Activated naive CD4-positive, alpha-beta T cell treated with anti-CD3 and anti-CD28 coated beads, Interleukin-2, amount 10 ng/mL, durations not matched to agents 7 days and 5 days (primary cell): ENCODE measurements at regions of chr5 and their contacts with region 1.

Region 1: GRCh38 chr5:132064738-132065331 is 4.4 kb downstream of the IL3 start:
- DNase-seq: peak; percentile 87
- H3K4me3 Mint-ChIP-seq: no peak overlapping the region
- H3K27ac Mint-ChIP-seq: peak overlapping the region; percentile 26
- H3K4me1 Mint-ChIP-seq: peaks cover 19% of the 10 kb centered on the region
- H3K27me3 Mint-ChIP-seq: peaks cover 58% of the 10 kb centered on the region

Region 2: GRCh38 chr5:131142970-131143617 is 921.7 kb before region 1 on chr5:
- CTCF ChIA-PET with region 1: no interaction called
- DNase-seq: no peak
- H3K4me3 Mint-ChIP-seq: no peak overlapping the region
- H3K27ac Mint-ChIP-seq: no peak overlapping the region
- H3K4me1 Mint-ChIP-seq: peaks cover 7% of the 10 kb centered on the region
- H3K27me3 Mint-ChIP-seq: no peaks in the 10 kb centered on the region

Region 3: DNA sequence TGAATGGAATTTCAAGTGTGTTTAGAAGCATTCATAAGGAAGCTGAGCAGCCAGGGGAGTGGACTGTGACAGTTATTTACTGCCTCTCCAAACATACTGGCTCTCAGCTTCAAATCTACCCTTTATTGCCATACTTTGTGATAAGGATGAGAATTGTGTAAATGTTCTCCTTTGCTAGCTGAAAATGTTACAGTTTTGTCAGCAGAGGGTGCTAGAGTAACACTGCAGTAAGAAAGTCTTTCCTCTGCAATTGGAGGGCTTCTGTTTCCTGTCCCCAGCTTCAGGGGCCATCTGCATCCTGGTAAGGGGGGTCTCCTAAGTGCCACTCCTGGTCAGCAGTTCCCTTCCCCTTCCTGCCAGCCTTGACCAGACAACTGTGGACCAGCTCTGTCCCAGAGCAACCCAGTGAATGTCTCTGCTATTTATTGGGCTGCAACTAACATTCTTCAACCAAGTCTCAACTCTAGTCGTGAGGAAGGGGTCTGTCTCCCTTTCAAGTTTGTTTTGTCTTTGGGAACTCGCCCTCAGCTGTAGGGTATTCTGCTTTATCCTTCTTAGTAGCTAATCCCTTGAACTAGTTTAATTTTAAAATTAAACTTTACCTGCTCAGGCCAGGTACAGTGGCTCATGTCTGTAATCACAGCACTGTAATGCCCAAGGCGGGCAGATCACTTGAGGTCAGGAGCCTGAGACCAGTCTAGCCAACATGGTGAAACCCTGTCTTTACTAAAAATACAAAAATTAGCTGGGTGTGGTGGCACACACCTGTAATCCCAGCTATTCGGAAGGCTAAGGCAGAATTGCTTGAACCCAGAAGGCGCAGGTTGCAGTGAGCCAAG is 475.1 kb before region 1 on chr5:
- CTCF ChIA-PET with region 1: interaction called, 39 read pairs
- DNase-seq: peak; percentile 33
- H3K4me3 Mint-ChIP-seq: no peak overlapping the region
- H3K27ac Mint-ChIP-seq: no peak overlapping the region
- H3K4me1 Mint-ChIP-seq: peaks cover 35% of the 10 kb centered on the region
- H3K27me3 Mint-ChIP-seq: no peaks in the 10 kb centered on the region

Region 4: DNA sequence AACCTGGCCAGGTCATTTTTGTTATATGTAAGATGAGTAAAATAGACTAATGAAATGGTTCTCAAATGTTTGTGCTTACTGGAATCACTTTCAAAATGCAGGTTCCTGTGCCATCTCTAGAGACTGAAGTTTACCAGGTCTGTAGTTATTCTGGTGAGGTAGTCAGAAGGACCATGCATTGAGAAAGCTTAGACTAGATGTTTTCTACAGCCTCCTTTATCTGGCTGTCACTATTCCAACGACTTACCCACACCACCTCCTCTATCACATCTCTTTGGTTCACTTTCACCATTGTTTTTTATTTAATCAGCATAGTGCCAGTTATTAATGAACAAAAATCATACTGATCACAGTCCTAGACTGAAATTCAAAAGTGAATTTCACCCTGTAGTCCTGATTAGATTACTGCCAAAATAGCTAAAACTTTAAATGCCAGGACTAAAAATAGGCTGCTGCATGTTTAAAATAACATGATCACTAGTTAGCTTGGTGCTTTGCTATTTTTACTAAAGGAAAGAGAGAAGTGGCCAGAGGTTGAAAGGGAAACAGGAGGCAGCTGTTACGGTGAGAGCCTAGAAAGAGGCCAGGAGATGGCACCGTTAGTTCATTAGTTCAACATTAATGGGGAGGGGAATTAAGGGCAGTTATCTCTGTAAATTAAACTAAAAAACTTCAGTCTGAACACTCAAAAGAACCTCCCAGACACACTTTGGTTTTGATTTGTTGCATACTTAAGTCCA is 254.2 kb before region 1 on chr5:
- CTCF ChIA-PET with region 1: interaction called, 29 read pairs
- DNase-seq: peak; percentile 27
- H3K4me3 Mint-ChIP-seq: no peak overlapping the region
- H3K27ac Mint-ChIP-seq: no peak overlapping the region
- H3K4me1 Mint-ChIP-seq: peaks cover 3% of the 10 kb centered on the region
- H3K27me3 Mint-ChIP-seq: peaks cover 5% of the 10 kb centered on the region

Region 5: DNA sequence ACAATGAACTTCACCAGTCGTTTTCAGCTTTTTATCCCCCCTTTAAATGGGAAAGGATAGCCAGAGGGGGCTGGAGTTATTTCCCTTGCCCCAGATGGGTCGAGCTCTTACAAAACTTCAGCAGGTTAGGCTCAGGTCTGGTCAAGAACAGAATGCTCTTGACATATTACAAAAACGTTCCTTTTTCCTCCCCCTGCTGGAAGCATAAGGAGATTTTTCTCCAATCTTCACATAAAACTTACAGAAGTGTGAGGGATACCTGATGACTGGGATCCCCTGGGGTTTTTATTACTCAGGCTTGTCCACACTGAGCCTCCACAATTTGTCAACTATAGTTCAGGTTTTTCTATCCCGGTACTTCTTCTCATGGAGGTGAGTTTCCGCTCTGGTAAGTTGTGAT is 69.5 kb after region 1 on chr5:
- CTCF ChIA-PET with region 1: interaction called, 18 read pairs
- DNase-seq: no peak
- H3K4me3 Mint-ChIP-seq: no peak overlapping the region
- H3K27ac Mint-ChIP-seq: no peak overlapping the region
- H3K4me1 Mint-ChIP-seq: no peaks in the 10 kb centered on the region
- H3K27me3 Mint-ChIP-seq: peaks cover 57% of the 10 kb centered on the region

Region 6: DNA sequence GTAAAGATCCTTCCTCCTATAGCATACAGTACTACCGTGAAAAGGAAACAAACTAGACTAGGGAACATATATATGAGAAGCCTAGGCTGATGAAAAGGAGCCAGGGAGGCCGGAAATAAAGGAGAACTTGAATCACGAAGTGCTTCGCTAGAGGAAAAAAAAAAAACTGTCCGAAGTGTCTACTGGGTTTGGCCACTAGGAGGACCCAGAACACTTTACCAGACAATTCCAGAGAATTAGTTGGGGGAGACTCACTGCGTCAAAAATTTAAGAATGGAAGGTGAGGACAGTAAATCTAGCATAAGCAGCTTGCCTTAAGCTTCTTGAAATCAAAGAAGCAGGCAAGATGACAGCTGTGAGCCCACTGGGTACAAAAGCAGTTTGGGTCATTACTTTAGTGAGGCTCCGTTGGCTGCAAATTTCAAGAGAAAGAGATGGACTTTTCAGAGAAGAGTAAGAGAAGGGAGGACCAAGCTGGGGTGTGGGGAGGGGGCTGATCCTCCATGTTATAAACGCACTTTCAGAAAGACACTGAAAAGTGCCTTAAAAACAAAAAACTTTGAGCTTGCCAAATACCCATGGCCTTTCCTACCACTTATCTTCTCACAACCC is 115.4 kb after region 1 on chr5:
- CTCF ChIA-PET with region 1: interaction called, 16 read pairs
- DNase-seq: no peak
- H3K4me3 Mint-ChIP-seq: no peak overlapping the region
- H3K27ac Mint-ChIP-seq: peak overlapping the region; percentile 67
- H3K4me1 Mint-ChIP-seq: peaks cover 39% of the 10 kb centered on the region
- H3K27me3 Mint-ChIP-seq: peaks cover 4% of the 10 kb centered on the region